B cell (primary cell): ENCODE measurements at regions of chr9 and their contacts with region 1.

Region 1: GRCh38 chr9:120868676-120869359 is 8.2 kb downstream of the PHF19 start:
- DNase-seq: peak; percentile 97
- ATAC-seq: peak; percentile 90
- H3K4me3 ChIP-seq: peak overlapping the region in 4 of 5 experiments; percentile 57 to 84 (median 71)
- H3K4me3 Mint-ChIP-seq: peak overlapping the region; percentile 97
- H3K27ac ChIP-seq: peak overlapping the region; percentile 69 to 81
- H3K27ac Mint-ChIP-seq: peak overlapping the region; percentile 98
- H3K4me1 ChIP-seq: peaks cover 0 to 19% of the 10 kb centered on the region in 2 donors
- H3K4me1 Mint-ChIP-seq: peaks cover 13% of the 10 kb centered on the region
- H3K27me3 ChIP-seq: no peaks in the 10 kb centered on the region
- H3K27me3 Mint-ChIP-seq: no peaks in the 10 kb centered on the region
- CTCF ChIP-seq: peak; percentile 70

Region 2: DNA sequence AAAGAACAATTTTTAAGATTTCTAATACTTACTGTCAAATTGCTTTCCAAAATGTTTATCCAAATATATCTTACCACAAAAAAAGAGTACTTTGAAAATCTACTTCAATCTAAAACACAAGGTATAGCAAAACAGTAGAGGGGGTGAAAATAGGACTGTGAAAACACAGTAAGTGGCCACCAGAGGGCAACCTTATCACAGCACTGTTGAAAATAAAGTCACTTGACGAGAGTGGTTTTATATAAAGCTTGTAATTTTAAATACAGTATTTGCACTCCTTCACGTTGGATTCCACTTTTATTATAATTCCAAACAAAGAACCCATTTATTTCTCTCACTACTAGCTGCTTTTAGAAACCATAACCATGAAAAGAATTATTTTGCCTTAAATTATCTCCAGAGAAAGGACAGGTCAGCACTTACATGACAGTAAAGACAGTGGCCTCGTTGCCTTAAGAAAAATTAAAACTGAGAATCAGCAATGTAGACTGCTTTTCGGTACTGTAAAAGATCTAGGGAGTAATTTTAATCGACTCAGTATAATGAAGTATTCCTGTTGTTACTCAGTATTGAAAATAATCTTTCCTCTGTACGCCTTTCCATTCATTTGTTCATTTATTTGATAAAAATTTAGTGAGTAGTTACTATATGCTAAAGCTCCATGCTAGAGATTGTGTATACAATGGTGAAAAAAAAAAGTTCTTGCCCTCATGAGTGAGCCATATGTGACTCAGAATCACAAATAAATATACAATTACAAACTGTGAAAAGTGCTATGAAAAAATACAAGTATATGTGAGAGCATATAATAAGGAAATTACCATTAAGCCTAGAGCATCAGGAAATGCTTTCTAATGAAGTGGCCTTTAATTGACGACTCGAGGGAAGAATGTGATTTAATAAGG is 248.8 kb before region 1 on chr9:
- CTCF ChIA-PET with region 1: interaction called, 4 read pairs
- POLR2A ChIA-PET with region 1: interaction called, 10 read pairs
- intact Hi-C with region 1: no loop called
- DNase-seq: peak; percentile 71
- ATAC-seq: peak; percentile 68
- H3K4me3 ChIP-seq: no peak overlapping the region
- H3K4me3 Mint-ChIP-seq: no peak overlapping the region
- H3K27ac ChIP-seq: no peak overlapping the region
- H3K27ac Mint-ChIP-seq: no peak overlapping the region
- H3K4me1 ChIP-seq: no peaks in the 10 kb centered on the region
- H3K4me1 Mint-ChIP-seq: peaks cover 2% of the 10 kb centered on the region
- H3K27me3 ChIP-seq: no peaks in the 10 kb centered on the region
- H3K27me3 Mint-ChIP-seq: no peaks in the 10 kb centered on the region
- CTCF ChIP-seq: peak; percentile 97

Region 3: DNA sequence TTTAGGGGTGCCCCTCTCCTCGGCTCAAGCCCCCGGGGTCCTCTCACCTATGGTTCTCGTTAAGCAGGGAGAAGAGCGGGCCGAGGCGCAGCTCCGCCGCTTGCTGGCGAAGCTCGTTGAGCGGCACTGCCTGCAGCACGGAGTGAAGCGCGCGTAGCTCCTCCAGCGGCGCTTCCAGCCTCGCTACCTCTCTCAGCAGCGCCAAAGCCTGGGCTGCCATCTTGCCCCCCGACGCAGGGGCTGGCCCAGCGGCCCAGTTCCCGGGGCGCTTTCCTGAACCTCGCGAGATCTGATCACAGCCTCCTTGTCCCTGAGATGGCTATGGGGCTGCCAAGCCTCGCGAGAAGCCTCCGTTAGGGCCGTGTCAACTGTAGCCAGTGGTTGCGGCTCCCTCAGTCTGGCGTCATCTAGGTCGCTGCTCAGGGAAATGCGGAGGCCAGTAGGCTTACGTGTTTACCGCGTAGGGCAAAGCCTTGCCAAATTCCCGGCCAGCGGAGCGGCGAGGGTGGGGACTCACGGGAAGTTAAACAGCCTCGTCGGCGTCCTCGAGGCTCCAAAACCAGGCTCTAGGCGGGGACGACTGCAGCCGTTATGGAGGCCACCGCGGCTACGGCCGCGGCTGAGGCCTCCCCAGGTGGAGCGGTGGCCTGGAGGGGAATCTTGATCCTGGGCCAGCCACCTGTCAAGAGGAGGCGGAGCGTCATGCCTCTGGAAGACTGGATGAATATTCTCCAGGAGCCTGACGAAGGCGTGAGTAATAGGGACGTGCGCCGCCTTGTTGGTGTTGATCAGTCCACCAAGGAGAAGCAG is 25.9 kb before region 1 on chr9 and contains the start of gene PSMD5:
- CTCF ChIA-PET with region 1: interaction called, 4 read pairs
- POLR2A ChIA-PET with region 1: interaction called, 3 read pairs
- intact Hi-C with region 1: loop called (anchors 1 kb)
- DNase-seq: peak; percentile 96
- ATAC-seq: peak; percentile 98
- H3K4me3 ChIP-seq: peak within 1 kb of the TSS; percentile 68 to 99 (median 82)
- H3K4me3 Mint-ChIP-seq: peak within 1 kb of the TSS; percentile 90
- H3K27ac ChIP-seq: peak within 1 kb of the TSS; percentile 89
- H3K27ac Mint-ChIP-seq: peak within 1 kb of the TSS; percentile 95
- H3K4me1 ChIP-seq: peaks cover 21 to 23% of the 10 kb centered on the region in 2 donors
- H3K4me1 Mint-ChIP-seq: peaks cover 27% of the 10 kb centered on the region
- H3K27me3 ChIP-seq: no peaks in the 10 kb centered on the region
- H3K27me3 Mint-ChIP-seq: no peaks in the 10 kb centered on the region
- CTCF ChIP-seq: no peak
- total RNA-seq, gene PSMD5: 25.3 and 26.8 TPM in 2 replicates

Region 4: GRCh38 chr9:120928483-120929228 is 59.8 kb after region 1 on chr9:
- CTCF ChIA-PET with region 1: interaction called, 102 read pairs
- POLR2A ChIA-PET with region 1: interaction called, 10 read pairs
- intact Hi-C with region 1: loop called (anchors 1 kb)
- DNase-seq: peak; percentile 83
- ATAC-seq: peak; percentile 60
- H3K4me3 ChIP-seq: peak overlapping the region in 4 of 5 experiments; percentile 56 to 82 (median 72)
- H3K4me3 Mint-ChIP-seq: peak overlapping the region; percentile 81
- H3K27ac ChIP-seq: peak overlapping the region; percentile 90 to 99
- H3K27ac Mint-ChIP-seq: peak overlapping the region; percentile 89
- H3K4me1 ChIP-seq: peaks cover 75 to 89% of the 10 kb centered on the region in 2 donors
- H3K4me1 Mint-ChIP-seq: peaks cover 86% of the 10 kb centered on the region
- H3K27me3 ChIP-seq: no peaks in the 10 kb centered on the region
- H3K27me3 Mint-ChIP-seq: no peaks in the 10 kb centered on the region
- CTCF ChIP-seq: peak; percentile 29

Region 5: GRCh38 chr9:120985810-120986222 is 117.0 kb after region 1 on chr9:
- CTCF ChIA-PET with region 1: interaction called, 14 read pairs
- POLR2A ChIA-PET with region 1: no interaction called
- intact Hi-C with region 1: no loop called
- DNase-seq: peak; percentile 26
- ATAC-seq: no peak
- H3K4me3 ChIP-seq: no peak overlapping the region
- H3K4me3 Mint-ChIP-seq: no peak overlapping the region
- H3K27ac ChIP-seq: no peak overlapping the region
- H3K27ac Mint-ChIP-seq: no peak overlapping the region
- H3K4me1 ChIP-seq: peaks cover 0 to 3% of the 10 kb centered on the region in 2 donors
- H3K4me1 Mint-ChIP-seq: peaks cover 4% of the 10 kb centered on the region
- H3K27me3 ChIP-seq: no peaks in the 10 kb centered on the region
- H3K27me3 Mint-ChIP-seq: no peaks in the 10 kb centered on the region
- CTCF ChIP-seq: no peak

Region 6: DNA sequence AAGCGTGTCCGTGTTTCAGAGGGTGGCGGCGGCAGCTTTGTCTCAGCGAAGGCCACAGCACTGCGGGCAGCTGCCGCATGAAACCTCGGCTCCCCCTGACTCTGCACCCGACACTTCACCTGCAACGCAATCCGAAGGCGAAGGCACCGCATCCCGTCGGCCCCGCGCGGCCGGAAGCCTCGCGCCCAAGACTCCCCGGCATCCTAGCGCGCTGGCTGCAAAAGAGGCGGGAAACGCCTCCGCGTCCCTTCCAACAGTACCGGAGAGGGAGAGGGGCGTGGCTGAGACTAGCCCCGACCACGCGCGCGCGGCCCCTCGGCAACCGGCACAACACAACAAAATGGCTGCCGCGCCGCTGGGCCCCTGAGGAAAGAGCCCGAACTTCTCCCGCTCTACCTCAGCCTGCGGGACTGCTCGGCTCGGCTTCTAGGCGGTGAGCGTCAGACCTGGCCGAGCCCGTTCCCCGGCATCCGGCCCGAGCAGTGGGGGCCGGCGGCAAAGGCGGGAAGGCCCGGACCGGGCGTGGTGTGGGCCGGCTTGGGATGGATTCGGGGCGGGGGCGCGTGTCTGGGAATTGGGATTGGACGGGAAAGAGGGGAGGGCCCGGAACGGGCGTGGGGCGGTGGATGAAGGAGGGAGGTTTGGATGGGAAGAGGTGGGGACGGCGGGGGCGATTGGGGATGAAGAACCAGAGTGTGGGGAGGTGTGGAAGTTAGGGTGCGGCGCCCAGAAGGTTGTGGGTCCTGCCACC is 206.0 kb after region 1 on chr9 and contains the start of gene CNTRL:
- CTCF ChIA-PET with region 1: no interaction called
- POLR2A ChIA-PET with region 1: no interaction called
- intact Hi-C with region 1: loop called (anchors 1 kb)
- DNase-seq: peak; percentile 85
- ATAC-seq: peak; percentile 72
- H3K4me3 ChIP-seq: peak within 1 kb of the TSS; percentile 80 to 99 (median 92)
- H3K4me3 Mint-ChIP-seq: peak within 1 kb of the TSS; percentile 100
- H3K27ac ChIP-seq: peak within 1 kb of the TSS; percentile 86 to 99
- H3K27ac Mint-ChIP-seq: peak within 1 kb of the TSS; percentile 94
- H3K4me1 ChIP-seq: peaks cover 42 to 49% of the 10 kb centered on the region in 2 donors
- H3K4me1 Mint-ChIP-seq: peaks cover 64% of the 10 kb centered on the region
- H3K27me3 ChIP-seq: no peaks in the 10 kb centered on the region
- H3K27me3 Mint-ChIP-seq: no peaks in the 10 kb centered on the region
- CTCF ChIP-seq: no peak
- total RNA-seq, gene CNTRL: 146 and 150 TPM in 2 replicates

Region 7: GRCh38 chr9:121201738-121202533 is 333.1 kb after region 1 on chr9 and contains the start of gene RAB14:
- CTCF ChIA-PET with region 1: no interaction called
- POLR2A ChIA-PET with region 1: no interaction called
- intact Hi-C with region 1: loop called (anchors 10 kb)
- DNase-seq: peak; percentile 100
- ATAC-seq: peak; percentile 89
- H3K4me3 ChIP-seq: peak within 1 kb of the TSS; percentile 80 to 93 (median 82)
- H3K4me3 Mint-ChIP-seq: peak within 1 kb of the TSS; percentile 97
- H3K27ac ChIP-seq: peak within 1 kb of the TSS; percentile 79 to 91
- H3K27ac Mint-ChIP-seq: peak within 1 kb of the TSS; percentile 98
- H3K4me1 ChIP-seq: peaks cover 36 to 47% of the 10 kb centered on the region in 2 donors
- H3K4me1 Mint-ChIP-seq: peaks cover 55% of the 10 kb centered on the region
- H3K27me3 ChIP-seq: no peaks in the 10 kb centered on the region
- H3K27me3 Mint-ChIP-seq: no peaks in the 10 kb centered on the region
- CTCF ChIP-seq: peak; percentile 51
- total RNA-seq, gene RAB14: 50.9 and 52.6 TPM in 2 replicates